ENCODE measurements at regions of chr15 and their contacts with region 1.

Region 1: DNA sequence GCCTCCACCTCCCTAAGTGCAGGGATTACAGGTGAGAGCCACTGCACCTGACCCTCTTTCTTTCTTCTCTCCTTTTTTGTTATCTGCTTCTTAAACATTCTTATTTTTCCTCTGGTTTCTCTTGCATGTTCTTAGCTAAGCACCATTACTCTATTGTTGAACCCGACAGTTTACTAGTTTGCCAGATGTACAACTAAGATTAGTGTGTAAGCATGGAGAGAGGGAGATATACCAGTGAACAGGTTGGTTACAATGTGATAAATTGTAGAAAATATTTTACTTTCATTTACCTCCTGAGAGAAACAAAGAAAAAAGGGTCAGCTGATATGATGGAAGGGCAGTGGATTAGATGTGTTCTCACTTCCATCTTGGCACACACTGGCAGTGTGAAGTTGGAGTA is 4.9 kb downstream of the HAUS2 start:
- DNase-seq: no peak
- H3K4me3 ChIP-seq: no peak overlapping the region
- CTCF ChIP-seq: no peak

Region 2: DNA sequence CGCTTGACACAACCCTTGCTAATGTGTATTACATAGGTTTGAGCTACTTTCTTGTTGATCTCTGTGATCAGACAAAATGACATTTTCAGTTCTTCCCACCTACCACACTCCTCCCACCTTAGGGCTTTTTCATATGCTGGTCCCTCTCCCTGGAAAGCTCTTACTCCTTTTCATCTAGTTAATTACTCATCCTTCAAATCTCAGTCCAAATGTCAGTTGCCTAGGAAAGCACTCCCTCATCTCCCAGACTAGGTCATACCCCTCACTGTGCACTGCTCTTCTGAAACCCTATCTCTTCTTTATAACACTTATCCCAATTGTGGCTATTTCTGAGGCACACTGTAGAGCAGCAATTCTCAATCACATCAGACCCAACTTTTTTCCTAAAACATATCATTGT is 69.9 kb before region 1 on chr15:
- CTCF ChIA-PET with region 1: no interaction called
- POLR2A ChIA-PET with region 1: no interaction called
- DNase-seq: no peak
- H3K4me3 ChIP-seq: no peak overlapping the region
- CTCF ChIP-seq: no peak

Region 3: DNA sequence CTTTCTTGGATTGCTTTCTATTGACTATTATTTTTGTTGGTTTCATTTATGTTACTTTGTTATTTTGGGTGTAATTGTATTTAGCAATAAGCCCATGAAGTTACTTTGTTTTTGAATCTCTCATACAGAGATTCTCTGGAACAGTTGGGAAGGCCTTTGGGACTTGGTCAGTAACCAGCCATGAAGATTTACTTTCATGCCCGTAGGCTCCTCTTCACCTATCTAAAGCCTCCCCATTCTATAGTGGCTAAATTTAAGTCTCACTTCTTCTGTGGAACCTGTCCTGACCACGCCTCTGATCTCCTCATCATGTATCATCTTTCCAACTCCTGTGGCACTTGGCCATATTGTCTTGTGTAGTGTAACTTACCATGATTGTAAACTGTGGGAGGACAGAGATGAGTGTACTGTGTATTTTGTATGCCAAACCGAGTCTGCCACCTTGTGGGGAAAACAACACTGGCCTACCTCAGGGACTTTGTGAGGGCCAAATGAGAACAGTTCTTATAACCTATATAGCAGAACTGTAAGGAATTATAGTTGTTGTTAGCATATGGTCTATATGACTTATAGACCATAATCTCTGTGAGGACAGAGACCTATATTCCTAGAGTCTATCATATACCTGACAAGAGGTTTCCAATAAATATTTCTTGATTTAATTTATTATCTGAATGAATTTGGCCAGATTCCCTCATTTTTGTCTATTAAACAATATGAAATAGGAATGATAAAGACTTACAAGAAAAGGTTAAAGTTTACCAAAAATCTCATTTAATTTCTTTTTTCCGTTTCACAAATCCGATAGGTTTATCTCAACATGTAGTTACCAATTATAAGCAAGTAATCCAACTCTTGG is 96.9 kb after region 1 on chr15:
- CTCF ChIA-PET with region 1: interaction called, 12 read pairs
- POLR2A ChIA-PET with region 1: interaction called, 4 read pairs
- DNase-seq: peak; percentile 42
- H3K4me3 ChIP-seq: no peak overlapping the region
- CTCF ChIP-seq: peak; percentile 81